Posterior vena cava (tissue), 2 donors: ENCODE measurements at regions of chr6 and their contacts with region 1.

Region 1: DNA sequence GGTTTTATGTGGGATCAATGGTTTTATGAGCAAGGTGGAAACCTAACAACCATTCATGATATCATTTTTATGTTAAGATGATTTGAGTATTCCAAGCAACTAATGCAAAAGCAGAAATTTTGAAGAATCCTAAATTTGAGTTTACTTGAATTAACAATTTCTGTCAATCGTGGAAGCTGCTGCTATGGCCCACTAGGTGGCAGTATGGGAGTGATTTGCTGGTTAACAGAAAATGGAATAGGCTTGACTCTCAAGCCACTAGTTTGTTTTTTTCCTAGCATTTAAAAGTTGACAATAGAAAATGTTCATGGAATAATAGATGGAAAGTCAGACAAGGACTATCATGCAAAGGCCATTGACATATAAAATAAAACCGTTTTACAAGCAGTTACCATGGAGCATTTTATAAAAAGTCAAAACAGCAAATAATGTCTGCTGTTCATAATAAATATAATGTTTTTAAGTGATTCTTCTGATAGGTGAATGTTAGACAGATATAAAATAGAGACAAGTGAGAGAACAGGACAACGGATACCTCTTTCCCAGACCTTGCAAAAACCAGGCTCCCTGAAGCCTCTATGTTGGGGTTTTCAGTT is 43.0 kb upstream of the TMEM200A start:
- DNase-seq: no peak

Region 2: GRCh38 chr6:129646642-129647041 is 676.1 kb before region 1 on chr6:
- intact Hi-C with region 1: no loop called
- DNase-seq: no peak

Region 3: DNA sequence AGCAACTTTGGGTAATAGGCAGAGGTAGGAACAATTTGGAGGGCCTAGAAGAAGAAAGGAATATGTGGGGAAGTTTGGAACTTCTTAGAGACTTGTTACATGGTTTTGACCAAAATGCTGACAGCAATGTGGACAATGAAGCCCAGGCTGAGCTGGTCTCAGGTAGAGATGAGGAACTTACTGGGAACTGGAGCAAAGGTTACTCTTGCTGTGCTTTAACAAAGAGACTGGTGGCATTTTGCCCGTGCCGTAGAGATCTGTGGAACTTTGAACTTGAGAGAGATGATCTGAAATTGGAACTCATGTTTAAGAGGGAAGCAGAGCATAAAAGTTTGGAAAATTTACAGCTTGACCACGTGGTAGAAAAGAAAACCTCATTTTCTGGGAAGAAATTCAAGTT is 14.8 kb after region 1 on chr6:
- intact Hi-C with region 1: loop called in 1 of 2 experiments (anchors 1 kb)
- DNase-seq: no peak

Region 4: GRCh38 chr6:130697995-130698535 is 375.3 kb after region 1 on chr6:
- intact Hi-C with region 1: loop called in 1 of 2 experiments (anchors 5 kb)
- DNase-seq: no peak

Region 5: DNA sequence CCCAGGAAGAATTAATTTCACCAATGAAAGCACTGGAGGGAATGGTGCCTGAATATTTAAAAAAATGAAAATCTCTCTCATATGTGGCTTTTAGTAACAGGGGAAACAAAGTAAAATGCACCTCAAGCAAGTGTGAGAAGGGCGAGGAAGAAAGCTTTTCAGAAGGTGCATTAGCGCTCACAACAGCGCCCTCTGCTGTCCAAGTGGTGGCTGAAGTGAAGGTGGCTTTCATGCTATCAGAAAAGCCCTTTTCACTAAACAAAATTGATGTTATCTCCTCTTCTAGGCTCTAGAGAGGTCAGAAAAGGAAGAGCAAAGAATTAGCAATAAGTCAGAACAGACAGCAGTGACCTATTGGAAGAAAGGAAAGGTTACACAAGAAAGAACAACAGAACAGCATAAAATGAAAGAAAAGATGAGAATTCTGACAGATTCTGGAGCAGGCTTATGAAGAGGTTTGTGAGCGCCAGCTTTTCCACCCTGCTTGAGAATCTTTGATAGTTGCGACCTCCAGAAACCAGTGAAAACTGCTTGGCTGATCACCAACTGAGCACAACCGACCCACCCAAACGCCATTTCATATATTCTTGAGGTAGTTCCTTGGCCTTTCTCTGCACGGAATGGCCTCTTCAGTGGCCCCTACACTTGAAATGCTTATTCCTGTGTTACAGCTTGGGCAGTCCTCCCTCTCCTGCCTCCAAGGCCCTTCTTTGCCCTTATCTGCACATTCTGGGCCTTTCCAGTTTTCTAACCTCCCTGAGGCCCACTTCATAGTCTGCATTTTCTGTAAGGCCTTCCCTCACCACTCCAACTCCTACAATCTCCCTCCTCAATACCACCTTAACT is 549.7 kb after region 1 on chr6:
- intact Hi-C with region 1: loop called in 1 of 2 experiments (anchors 10 kb)
- DNase-seq: peak; percentile 90